ENCODE measurements at regions of chr14 and their contacts with region 1.

Region 1: GRCh38 chr14:76918751-76919543 is 92.7 kb downstream of the LRRC74A start:
- DNase-seq: peak; percentile 31
- H3K4me3 Mint-ChIP-seq: no peak overlapping the region
- H3K27ac Mint-ChIP-seq: no peak overlapping the region
- H3K4me1 Mint-ChIP-seq: peaks cover 33% of the 10 kb centered on the region
- H3K27me3 Mint-ChIP-seq: no peaks in the 10 kb centered on the region

Region 2: GRCh38 chr14:76876076-76876475 is 42.9 kb before region 1 on chr14:
- CTCF ChIA-PET with region 1: interaction called, 80 read pairs
- POLR2A ChIA-PET with region 1: no interaction called
- intact Hi-C with region 1: no loop called
- DNase-seq: peak; percentile 61
- H3K4me3 Mint-ChIP-seq: no peak overlapping the region
- H3K27ac Mint-ChIP-seq: no peak overlapping the region
- H3K4me1 Mint-ChIP-seq: peaks cover 2% of the 10 kb centered on the region
- H3K27me3 Mint-ChIP-seq: no peaks in the 10 kb centered on the region

Region 3: DNA sequence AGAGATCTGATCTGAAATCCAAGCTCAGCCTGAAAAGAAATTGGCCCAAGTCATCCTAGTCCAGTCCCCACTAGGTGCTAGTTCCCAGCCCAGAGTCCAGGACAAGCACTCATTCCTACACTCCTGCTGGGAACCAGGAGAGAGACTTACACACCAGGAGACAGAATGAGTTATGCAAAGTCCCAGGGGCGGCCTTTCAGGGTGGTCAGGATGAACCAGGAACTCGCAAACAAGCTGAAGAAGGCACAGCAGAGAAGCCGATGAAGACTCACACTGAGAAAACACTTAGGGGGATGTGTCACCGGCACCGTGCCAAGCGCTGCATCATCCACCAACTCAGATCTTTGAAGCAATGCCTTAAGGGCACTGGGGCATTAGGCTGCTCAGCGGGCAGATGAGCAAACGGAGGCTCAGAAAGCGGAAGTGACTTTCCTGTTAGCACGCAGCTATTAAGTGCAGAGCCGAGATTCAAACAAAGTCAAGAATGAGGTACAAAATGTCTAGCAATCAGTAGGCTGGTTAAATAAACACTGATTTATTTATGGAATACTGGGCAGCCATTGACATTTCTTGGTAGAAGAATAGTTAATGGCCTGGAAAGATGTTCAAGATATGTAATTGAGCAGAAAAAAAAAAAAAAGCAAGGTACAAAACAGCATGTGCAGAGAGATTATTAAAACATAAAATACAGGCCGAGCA is 14.1 kb before region 1 on chr14:
- CTCF ChIA-PET with region 1: interaction called, 21 read pairs
- POLR2A ChIA-PET with region 1: no interaction called
- intact Hi-C with region 1: no loop called
- DNase-seq: peak; percentile 93
- H3K4me3 Mint-ChIP-seq: peak overlapping the region; percentile 14
- H3K27ac Mint-ChIP-seq: peak overlapping the region; percentile 70
- H3K4me1 Mint-ChIP-seq: peaks cover 28% of the 10 kb centered on the region
- H3K27me3 Mint-ChIP-seq: no peaks in the 10 kb centered on the region

Region 4: GRCh38 chr14:76962303-76962660 is 43.3 kb after region 1 on chr14:
- CTCF ChIA-PET with region 1: interaction called, 19 read pairs
- POLR2A ChIA-PET with region 1: no interaction called
- intact Hi-C with region 1: no loop called
- DNase-seq: no peak
- H3K4me3 Mint-ChIP-seq: peak overlapping the region; percentile 77
- H3K27ac Mint-ChIP-seq: peak overlapping the region; percentile 98
- H3K4me1 Mint-ChIP-seq: peaks cover 82% of the 10 kb centered on the region
- H3K27me3 Mint-ChIP-seq: peaks cover 3% of the 10 kb centered on the region

Region 5: GRCh38 chr14:77040059-77040740 is 121.3 kb after region 1 on chr14:
- CTCF ChIA-PET with region 1: interaction called, 46 read pairs
- POLR2A ChIA-PET with region 1: interaction called, 3 read pairs
- intact Hi-C with region 1: no loop called
- DNase-seq: peak; percentile 97
- H3K4me3 Mint-ChIP-seq: peak overlapping the region; percentile 77
- H3K27ac Mint-ChIP-seq: peak overlapping the region; percentile 99
- H3K4me1 Mint-ChIP-seq: peaks cover 88% of the 10 kb centered on the region
- H3K27me3 Mint-ChIP-seq: no peaks in the 10 kb centered on the region